ENCODE measurements at regions of chr11 and their contacts with region 1.

Region 1: DNA sequence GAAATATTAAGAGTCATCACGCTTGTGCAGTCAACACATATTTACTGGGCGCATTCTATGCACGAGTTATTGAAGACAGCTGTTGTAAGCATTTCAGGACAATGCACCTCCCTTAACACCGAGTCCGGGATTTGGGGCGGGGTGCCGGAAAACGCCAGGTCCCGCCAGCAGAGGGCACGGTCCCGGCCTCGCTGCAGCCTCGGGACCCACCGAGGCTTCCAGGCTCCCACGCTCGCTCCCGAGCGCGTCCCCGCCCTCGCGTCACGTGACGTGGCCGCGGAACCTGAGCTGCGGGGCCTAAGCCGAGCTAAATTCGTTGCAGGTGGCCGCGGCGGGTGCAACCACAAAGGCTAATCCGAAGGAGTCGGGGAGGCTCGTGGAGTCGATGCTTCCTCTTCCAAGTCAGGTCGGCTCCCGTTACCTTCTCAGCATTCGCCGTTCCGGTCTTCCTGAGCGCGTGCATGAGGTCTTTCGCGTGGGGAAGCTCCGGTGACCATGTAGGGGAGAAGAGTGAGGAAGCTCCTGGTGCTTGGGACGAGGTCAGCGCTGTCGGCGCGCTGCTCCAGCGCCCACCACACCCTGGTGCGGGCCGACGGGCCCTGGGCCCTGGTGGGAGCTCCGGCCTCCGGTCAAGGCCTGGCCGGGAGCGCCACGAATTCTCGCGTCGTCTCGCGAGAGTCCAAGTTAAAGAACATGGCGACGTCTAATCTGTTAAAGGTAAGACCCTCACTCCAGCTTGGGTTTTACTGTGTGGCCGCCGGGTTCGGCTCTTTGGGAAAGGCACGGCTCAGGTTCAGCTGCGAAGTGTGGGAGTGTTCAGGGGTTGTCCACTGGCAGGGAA is at the start of gene CUL5:
- DNase-seq: peak; percentile 97
- H3K4me3 Mint-ChIP-seq: peak within 1 kb of the TSS; percentile 98
- H3K27ac Mint-ChIP-seq: peak within 1 kb of the TSS; percentile 97
- H3K4me1 Mint-ChIP-seq: peaks cover 18% of the 10 kb centered on the region
- H3K27me3 Mint-ChIP-seq: no peaks in the 10 kb centered on the region
- total RNA-seq, gene CUL5: 38.0 and 40.1 TPM in 2 replicates

Region 2: GRCh38 chr11:107858217-107859070 is 150.4 kb before region 1 on chr11 and contains the start of gene SLC35F2:
- intact Hi-C with region 1: loop called (anchors 2 kb)
- DNase-seq: peak; percentile 92
- H3K4me3 Mint-ChIP-seq: peak within 1 kb of the TSS; percentile 90
- H3K27ac Mint-ChIP-seq: peak within 1 kb of the TSS; percentile 93
- H3K4me1 Mint-ChIP-seq: peaks cover 25% of the 10 kb centered on the region
- H3K27me3 Mint-ChIP-seq: peaks cover 4% of the 10 kb centered on the region
- total RNA-seq, gene SLC35F2: 31.9 and 35.1 TPM in 2 replicates

Region 3: GRCh38 chr11:108025387-108026080 is 16.7 kb after region 1 on chr11:
- intact Hi-C with region 1: loop called (anchors 2 kb)
- DNase-seq: no peak
- H3K4me3 Mint-ChIP-seq: no peak overlapping the region
- H3K27ac Mint-ChIP-seq: peak overlapping the region; percentile 30
- H3K4me1 Mint-ChIP-seq: peaks cover 19% of the 10 kb centered on the region
- H3K27me3 Mint-ChIP-seq: no peaks in the 10 kb centered on the region

Region 4: GRCh38 chr11:108131993-108132392 is 123.1 kb after region 1 on chr11:
- intact Hi-C with region 1: no loop called
- DNase-seq: no peak
- H3K4me3 Mint-ChIP-seq: no peak overlapping the region
- H3K27ac Mint-ChIP-seq: no peak overlapping the region
- H3K4me1 Mint-ChIP-seq: peaks cover 5% of the 10 kb centered on the region
- H3K27me3 Mint-ChIP-seq: no peaks in the 10 kb centered on the region

Region 5: DNA sequence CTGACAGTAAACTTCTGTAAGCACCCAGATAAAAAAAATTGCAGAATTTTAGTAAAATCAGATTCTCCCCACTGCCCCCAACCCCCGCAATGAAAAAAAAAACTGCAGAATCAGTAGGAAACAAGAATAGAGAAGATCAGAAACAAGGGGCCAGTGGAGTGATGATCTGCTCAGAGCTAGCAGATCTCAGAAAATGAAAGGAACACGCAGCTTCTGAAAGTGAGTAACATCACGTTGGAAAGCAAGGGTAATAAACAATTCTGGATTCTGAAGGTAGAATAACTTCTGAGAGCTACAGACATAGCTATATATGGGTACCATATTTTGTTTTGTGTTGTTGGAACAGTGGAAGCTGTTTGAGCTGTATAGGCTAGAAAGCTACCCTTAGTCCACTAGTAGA is 135.7 kb after region 1 on chr11:
- intact Hi-C with region 1: no loop called
- DNase-seq: no peak
- H3K4me3 Mint-ChIP-seq: peak overlapping the region; percentile 44
- H3K27ac Mint-ChIP-seq: peak overlapping the region; percentile 81
- H3K4me1 Mint-ChIP-seq: peaks cover 11% of the 10 kb centered on the region
- H3K27me3 Mint-ChIP-seq: no peaks in the 10 kb centered on the region

Region 6: DNA sequence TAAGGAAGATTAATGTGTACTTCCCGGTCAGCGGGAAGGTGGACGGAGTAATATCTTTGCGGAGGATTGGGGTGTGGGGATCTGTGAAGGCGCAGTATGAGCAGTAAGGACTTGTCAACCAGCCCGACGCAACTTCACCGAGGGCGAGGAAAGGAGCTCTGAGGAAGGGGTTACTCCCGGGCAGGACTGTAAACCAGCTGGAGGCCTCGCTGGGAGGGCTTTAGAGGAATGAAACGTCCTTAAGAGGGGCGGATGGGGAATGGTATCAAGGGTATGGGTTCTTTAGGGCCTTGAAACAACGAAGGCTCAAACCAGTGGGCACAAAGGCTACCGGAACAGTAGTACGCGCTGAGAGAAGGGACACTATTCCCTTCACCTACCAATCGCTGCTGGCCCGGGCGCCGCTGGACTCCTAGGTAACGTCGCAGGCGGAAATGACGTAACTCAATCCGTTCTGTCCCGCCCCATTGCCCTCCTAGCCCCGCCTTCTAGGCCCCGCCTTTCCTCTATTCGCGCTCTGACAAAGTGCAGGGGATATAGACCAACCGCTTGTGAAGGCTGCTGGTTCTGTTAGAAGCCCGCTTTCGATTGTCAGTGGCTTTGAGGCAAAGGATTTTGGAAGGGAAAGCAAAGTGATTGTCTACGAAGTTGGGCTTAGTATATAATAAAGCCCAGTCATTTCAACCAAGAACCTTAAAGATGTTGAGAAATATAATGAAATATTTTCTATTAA is 458.4 kb after region 1 on chr11 and contains the start of gene C11orf65:
- intact Hi-C with region 1: loop called (anchors 1 kb)
- DNase-seq: peak; percentile 99
- H3K4me3 Mint-ChIP-seq: peak within 1 kb of the TSS; percentile 100
- H3K27ac Mint-ChIP-seq: peak within 1 kb of the TSS; percentile 100
- H3K4me1 Mint-ChIP-seq: peaks cover 13% of the 10 kb centered on the region
- H3K27me3 Mint-ChIP-seq: no peaks in the 10 kb centered on the region
- total RNA-seq, gene C11orf65: 0.30 and 0.40 TPM in 2 replicates

Region 7: GRCh38 chr11:108664730-108665525 is 656.1 kb after region 1 on chr11 and contains the start of gene DDX10:
- intact Hi-C with region 1: loop called (anchors 2 kb)
- DNase-seq: peak; percentile 100
- H3K4me3 Mint-ChIP-seq: peak within 1 kb of the TSS; percentile 97
- H3K27ac Mint-ChIP-seq: peak within 1 kb of the TSS; percentile 99
- H3K4me1 Mint-ChIP-seq: peaks cover 38% of the 10 kb centered on the region
- H3K27me3 Mint-ChIP-seq: peaks cover 10% of the 10 kb centered on the region
- total RNA-seq, gene DDX10: 68.9 and 71.6 TPM in 2 replicates